HepG2 (cell line): ENCODE measurements at regions of chr7 and their contacts with region 1.

Region 1: DNA sequence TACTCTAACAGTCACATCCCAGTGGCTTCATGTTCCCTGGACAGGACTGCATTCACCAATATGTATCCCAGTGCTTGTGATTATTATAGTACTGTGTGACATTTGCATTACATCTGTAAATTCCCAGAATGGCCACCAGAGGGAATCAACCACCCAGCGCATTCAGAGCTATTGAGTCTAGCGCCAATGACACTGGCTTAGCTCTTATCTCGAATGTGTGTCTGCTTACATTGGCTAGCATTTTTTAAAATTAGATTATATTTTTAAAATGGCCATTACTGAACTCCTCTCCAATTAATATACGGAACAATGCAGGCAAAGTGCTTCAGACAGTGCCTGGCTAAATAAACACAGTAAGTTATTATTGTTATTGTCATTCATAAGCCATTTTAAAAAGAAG is 36.3 kb downstream of the TRIL start:
- DNase-seq: peak; percentile 69
- ATAC-seq: peak; percentile 94
- H3K4me3 ChIP-seq: peak overlapping the region in 1 of 3 experiments; percentile 49; a peak in 1 of 6 replicates
- H3K27ac ChIP-seq: no peak overlapping the region
- H3K4me1 ChIP-seq: peaks cover 19% of the 10 kb centered on the region
- H3K27me3 ChIP-seq: no peaks in the 10 kb centered on the region
- CTCF ChIP-seq: peak; percentile 78
- EP300 ChIP-seq: no peak
- POLR2A ChIP-seq: no peak
- RAD21 ChIP-seq: no peak

Region 2: DNA sequence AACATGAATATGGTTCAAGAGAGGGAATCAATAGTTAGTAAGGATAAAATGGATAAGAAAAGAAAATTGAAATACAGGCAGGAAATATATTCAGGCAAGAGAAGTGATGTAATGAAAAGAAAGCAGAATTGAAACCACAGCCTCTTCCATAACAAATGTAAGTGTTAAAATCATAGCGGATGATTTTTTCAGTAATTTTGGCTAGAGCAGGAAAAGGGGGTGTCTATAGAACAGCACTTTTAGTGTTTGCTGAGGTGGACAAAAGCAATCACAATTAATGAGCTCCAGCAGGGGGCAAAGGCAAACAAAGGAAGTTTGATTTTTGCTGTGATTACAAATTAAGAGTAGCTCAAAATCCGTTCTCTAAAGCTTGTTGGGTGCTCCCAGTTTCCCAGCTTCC is 42.7 kb before region 1 on chr7:
- CTCF ChIA-PET with region 1: no interaction called
- POLR2A ChIA-PET with region 1: no interaction called
- in situ Hi-C with region 1: no loop called
- intact Hi-C with region 1: no loop called
- DNase-seq: no peak
- ATAC-seq: no peak
- H3K4me3 ChIP-seq: no peak overlapping the region
- H3K27ac ChIP-seq: no peak overlapping the region
- H3K4me1 ChIP-seq: no peaks in the 10 kb centered on the region
- H3K27me3 ChIP-seq: peaks cover 2 to 4% of the 10 kb centered on the region in 2 experiments; a peak in 2 of 5 replicates
- CTCF ChIP-seq: no peak
- EP300 ChIP-seq: no peak
- POLR2A ChIP-seq: no peak
- RAD21 ChIP-seq: no peak

Region 3: DNA sequence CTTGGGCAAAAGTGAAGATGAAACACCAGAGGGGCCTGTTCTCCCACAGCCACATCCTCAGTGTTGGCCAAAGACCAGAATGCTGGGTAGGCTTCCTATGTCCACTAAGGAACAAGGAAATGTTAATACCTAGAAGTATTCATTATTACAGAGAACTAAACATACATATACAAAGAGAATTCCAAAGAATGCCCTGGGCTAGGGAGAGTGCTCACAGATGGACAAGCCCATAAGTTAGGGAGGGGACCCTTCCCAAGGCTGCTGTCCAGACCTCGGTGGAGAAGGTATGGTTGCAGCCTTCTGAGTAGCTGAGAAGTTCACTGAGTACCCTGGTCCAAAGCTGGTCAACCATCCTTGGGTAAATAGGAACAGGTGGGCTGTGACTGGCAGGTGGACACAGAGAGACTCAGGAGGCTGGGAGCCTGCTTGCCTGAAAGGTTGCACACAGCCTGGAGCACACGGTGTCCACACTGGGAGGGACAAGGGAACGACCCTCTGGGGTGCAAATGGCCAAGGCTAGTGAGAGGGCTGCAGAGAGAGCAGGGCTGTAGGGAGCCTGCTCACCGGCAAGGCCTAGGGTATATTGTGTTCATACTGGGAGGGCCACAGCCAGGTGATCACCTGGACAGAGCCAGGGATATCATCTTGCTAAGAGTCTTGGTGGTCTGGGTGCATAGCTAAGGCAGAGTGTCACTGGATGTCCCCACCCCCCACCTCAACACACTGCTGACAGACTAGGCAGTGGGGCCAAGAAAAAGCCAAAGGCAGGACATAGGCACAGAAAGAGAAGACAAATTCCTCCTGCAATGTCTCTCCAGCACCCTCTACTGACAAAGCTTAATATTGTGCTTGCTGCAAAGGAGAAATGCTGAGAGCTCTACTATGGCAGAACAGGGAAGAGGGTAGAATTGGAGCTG is 184.2 kb after region 1 on chr7:
- CTCF ChIA-PET with region 1: interaction called, 57 read pairs
- POLR2A ChIA-PET with region 1: interaction called, 7 read pairs
- in situ Hi-C with region 1: loop called (anchors 5 kb)
- intact Hi-C with region 1: loop called (anchors 1 kb)
- DNase-seq: peak; percentile 56
- ATAC-seq: peak; percentile 93
- H3K4me3 ChIP-seq: no peak overlapping the region
- H3K27ac ChIP-seq: no peak overlapping the region
- H3K4me1 ChIP-seq: peaks cover 18% of the 10 kb centered on the region
- H3K27me3 ChIP-seq: no peaks in the 10 kb centered on the region
- CTCF ChIP-seq: peak; percentile 90
- EP300 ChIP-seq: no peak
- POLR2A ChIP-seq: no peak
- RAD21 ChIP-seq: peak; percentile 71

Region 4: DNA sequence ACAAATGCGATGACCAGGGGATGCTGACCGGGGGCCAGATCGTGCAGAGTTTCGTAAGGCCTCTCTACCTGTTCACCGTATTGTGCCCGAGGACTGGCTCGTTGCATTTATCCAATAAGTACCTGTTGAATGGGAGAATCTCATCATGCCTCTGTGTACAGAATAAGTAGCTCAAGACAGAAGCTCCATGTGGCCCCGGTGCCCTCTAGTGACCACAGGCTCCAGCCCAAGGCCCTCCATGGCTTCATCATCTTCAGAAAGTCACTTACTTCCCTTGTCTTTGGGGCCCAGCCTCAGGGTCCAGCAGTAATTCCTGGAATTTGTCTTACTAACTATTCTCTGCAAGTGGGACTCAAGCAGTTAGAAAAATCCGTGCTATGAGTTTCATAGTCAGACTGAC is 423.8 kb after region 1 on chr7:
- CTCF ChIA-PET with region 1: interaction called, 9 read pairs
- POLR2A ChIA-PET with region 1: no interaction called
- in situ Hi-C with region 1: loop called (anchors 5 kb)
- intact Hi-C with region 1: loop called (anchors 5 kb)
- DNase-seq: peak; percentile 38
- ATAC-seq: peak; percentile 87
- H3K4me3 ChIP-seq: no peak overlapping the region
- H3K27ac ChIP-seq: no peak overlapping the region
- H3K4me1 ChIP-seq: peaks cover 41% of the 10 kb centered on the region
- H3K27me3 ChIP-seq: no peaks in the 10 kb centered on the region
- CTCF ChIP-seq: peak; percentile 81
- EP300 ChIP-seq: no peak
- POLR2A ChIP-seq: no peak
- RAD21 ChIP-seq: peak; percentile 53

Region 5: GRCh38 chr7:29609162-29610037 is 687.6 kb after region 1 on chr7:
- CTCF ChIA-PET with region 1: interaction called, 5 read pairs
- POLR2A ChIA-PET with region 1: no interaction called
- in situ Hi-C with region 1: no loop called
- intact Hi-C with region 1: loop called (anchors 5 kb)
- DNase-seq: peak; percentile 30
- ATAC-seq: peak; percentile 70
- H3K4me3 ChIP-seq: no peak overlapping the region
- H3K27ac ChIP-seq: no peak overlapping the region
- H3K4me1 ChIP-seq: peaks cover 31% of the 10 kb centered on the region
- H3K27me3 ChIP-seq: no peaks in the 10 kb centered on the region
- CTCF ChIP-seq: peak; percentile 81
- EP300 ChIP-seq: no peak
- POLR2A ChIP-seq: no peak
- RAD21 ChIP-seq: peak; percentile 44; the same call in 1 of the 2 replicates